ENCODE measurements at regions of chr10 and their contacts with region 1.

Region 1: GRCh38 chr10:63465293-63466143 is at the start of gene JMJD1C:
- DNase-seq: peak; percentile 84
- ATAC-seq: peak; percentile 72
- H3K4me3 ChIP-seq: peak within 1 kb of the TSS; percentile 66 to 97 (median 92)
- H3K4me3 Mint-ChIP-seq: peak within 1 kb of the TSS; percentile 98
- H3K27ac ChIP-seq: peak within 1 kb of the TSS; percentile 60 to 75
- H3K27ac Mint-ChIP-seq: peak within 1 kb of the TSS; percentile 95
- H3K4me1 ChIP-seq: peaks cover 13% of the 10 kb centered on the region in 2 donors
- H3K4me1 Mint-ChIP-seq: peaks cover 18% of the 10 kb centered on the region
- H3K27me3 ChIP-seq: no peaks in the 10 kb centered on the region
- H3K27me3 Mint-ChIP-seq: no peaks in the 10 kb centered on the region
- CTCF ChIP-seq: no peak
- total RNA-seq, gene JMJD1C: 235 and 247 TPM in 2 replicates

Region 2: DNA sequence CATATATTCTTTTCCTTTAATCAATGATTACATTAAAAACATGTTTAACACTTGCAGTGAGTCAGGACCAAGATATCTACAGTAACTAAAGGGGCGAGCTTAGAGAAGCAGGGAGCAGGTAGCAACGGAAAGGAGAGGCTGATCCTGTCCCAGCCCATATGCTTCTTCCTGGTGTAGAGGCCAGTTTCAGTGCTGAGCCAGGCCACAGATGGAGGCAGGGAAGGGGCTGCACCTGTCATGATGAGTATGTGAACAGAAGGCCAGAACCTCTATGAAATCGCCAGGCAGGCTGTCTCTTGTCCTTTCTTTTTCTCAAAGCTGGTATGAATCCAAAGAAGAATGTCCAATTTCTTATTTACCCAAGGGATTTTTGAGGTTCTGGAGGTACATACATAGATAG is 72.0 kb after region 1 on chr10:
- CTCF ChIA-PET with region 1: no interaction called
- POLR2A ChIA-PET with region 1: no interaction called
- intact Hi-C with region 1: no loop called
- DNase-seq: no peak
- ATAC-seq: no peak
- H3K4me3 ChIP-seq: no peak overlapping the region
- H3K4me3 Mint-ChIP-seq: no peak overlapping the region
- H3K27ac ChIP-seq: no peak overlapping the region
- H3K27ac Mint-ChIP-seq: no peak overlapping the region
- H3K4me1 ChIP-seq: no peaks in the 10 kb centered on the region
- H3K4me1 Mint-ChIP-seq: no peaks in the 10 kb centered on the region
- H3K27me3 ChIP-seq: no peaks in the 10 kb centered on the region
- H3K27me3 Mint-ChIP-seq: no peaks in the 10 kb centered on the region
- CTCF ChIP-seq: no peak

Region 3: DNA sequence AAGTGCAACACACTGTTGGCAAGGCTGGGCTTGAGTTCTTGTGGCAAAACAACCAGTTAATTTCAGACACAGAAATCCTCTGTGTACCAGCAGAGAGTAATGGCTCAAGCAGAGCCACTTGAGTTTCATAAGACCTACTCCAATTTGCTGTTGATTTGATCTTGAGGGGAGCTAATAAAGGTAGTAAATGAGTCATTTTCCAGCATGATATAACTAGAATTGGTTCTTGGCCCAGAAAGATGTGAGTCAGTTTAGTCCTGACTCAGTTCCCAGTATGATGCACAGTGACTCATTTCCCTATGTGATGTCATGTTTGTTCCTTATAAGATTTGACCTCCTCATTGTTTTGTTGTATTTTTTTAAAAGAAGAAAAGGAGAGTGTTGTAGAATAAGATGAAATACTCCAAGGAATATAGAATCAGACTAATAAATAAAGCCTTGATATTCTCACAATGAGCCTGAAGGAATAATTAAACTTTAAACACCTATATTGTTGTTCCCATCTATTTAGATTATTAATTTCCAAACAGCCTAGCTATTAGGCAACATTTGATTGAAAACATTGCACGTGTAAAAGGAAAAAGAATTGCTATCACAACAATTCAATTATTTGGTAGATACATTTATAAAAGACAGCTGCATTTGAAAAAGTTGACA is 241.9 kb after region 1 on chr10:
- CTCF ChIA-PET with region 1: no interaction called
- POLR2A ChIA-PET with region 1: no interaction called
- intact Hi-C with region 1: loop called (anchors 10 kb)
- DNase-seq: no peak
- ATAC-seq: peak; percentile 47
- H3K4me3 ChIP-seq: no peak overlapping the region
- H3K4me3 Mint-ChIP-seq: no peak overlapping the region
- H3K27ac ChIP-seq: no peak overlapping the region
- H3K27ac Mint-ChIP-seq: peak overlapping the region; percentile 16
- H3K4me1 ChIP-seq: peaks cover 23 to 28% of the 10 kb centered on the region in 2 donors
- H3K4me1 Mint-ChIP-seq: peaks cover 38% of the 10 kb centered on the region
- H3K27me3 ChIP-seq: no peaks in the 10 kb centered on the region
- H3K27me3 Mint-ChIP-seq: no peaks in the 10 kb centered on the region
- CTCF ChIP-seq: no peak

Measured in B cell (primary cell).